ENCODE measurements at regions of chr11 and their contacts with region 1.

Region 1: DNA sequence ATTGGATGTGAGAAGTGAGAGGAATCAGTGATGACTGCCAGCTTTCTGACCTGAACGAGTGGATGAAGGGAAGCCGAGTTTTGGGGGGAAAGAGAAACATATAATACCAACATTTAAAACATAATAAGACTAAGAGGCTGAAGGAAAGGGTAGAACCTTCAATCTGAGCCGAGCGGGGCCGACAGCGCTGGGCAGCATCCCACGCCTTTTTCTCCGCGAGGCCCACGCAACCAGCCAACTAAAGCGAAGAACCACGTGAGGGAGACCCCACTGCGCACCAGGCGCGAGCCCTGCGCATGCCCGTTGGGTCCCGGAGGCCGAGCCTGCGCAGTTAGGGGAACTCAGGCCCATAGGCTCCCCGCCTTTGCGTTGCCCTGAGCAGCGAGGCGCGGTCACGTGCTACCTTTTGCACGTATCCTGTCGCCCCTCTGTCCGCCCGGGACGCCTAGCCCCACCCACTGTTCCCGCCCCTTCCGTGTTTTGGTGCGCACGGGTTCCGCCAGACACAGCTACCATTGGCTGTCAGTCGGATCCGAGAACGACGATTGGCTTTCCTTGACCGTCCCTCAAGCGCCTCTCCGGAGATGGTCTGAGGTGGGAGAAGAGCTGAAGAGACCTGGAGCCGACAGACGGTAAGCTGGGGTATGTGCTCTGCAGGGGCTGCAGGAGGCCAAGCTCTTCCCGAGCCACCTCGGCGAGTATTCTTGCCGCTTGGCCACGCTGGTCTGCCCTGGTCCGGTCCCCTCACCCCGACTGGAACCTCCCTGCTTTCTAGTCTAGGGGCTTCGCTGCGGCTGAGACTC is at the start of gene HINFP:
- DNase-seq: peak; percentile 100
- ATAC-seq: peak; percentile 99 to 100
- H3K4me3 ChIP-seq: peak within 1 kb of the TSS; percentile 67 to 97 (median 87)
- H3K27ac ChIP-seq: peak within 1 kb of the TSS; percentile 85 to 90 (median 88)
- H3K4me1 ChIP-seq: peaks cover 16 to 20% of the 10 kb centered on the region in 2 donors
- H3K27me3 ChIP-seq: no peaks in the 10 kb centered on the region
- CTCF ChIP-seq: no peak
- POLR2A ChIP-seq: peak; percentile 63 to 76
- total RNA-seq, gene HINFP: 8.1 to 17.8 (median 15.3) TPM

Region 2: GRCh38 chr11:118746988-118747585 is 374.1 kb before region 1 on chr11:
- in situ Hi-C with region 1: no loop called
- intact Hi-C with region 1: no loop called
- DNase-seq: no peak
- ATAC-seq: no peak
- H3K4me3 ChIP-seq: no peak overlapping the region
- H3K27ac ChIP-seq: no peak overlapping the region
- H3K4me1 ChIP-seq: no peaks in the 10 kb centered on the region
- H3K27me3 ChIP-seq: no peaks in the 10 kb centered on the region
- CTCF ChIP-seq: no peak
- POLR2A ChIP-seq: no peak

Region 3: GRCh38 chr11:119030329-119031049 is 90.7 kb before region 1 on chr11 and contains the start of gene SLC37A4:
- in situ Hi-C with region 1: no loop called
- intact Hi-C with region 1: no loop called
- DNase-seq: peak; percentile 98 to 99
- ATAC-seq: peak; percentile 77
- H3K4me3 ChIP-seq: peak within 1 kb of the TSS; percentile 83 to 94 (median 91)
- H3K27ac ChIP-seq: peak within 1 kb of the TSS; percentile 92 to 98 (median 94)
- H3K4me1 ChIP-seq: peaks cover 48 to 50% of the 10 kb centered on the region in 2 donors
- H3K27me3 ChIP-seq: no peaks in the 10 kb centered on the region
- CTCF ChIP-seq: peak; percentile 87 to 92 (median 90)
- POLR2A ChIP-seq: peak; percentile 82 to 85
- total RNA-seq, gene SLC37A4: 29.7 to 72.9 (median 56.4) TPM

Region 4: DNA sequence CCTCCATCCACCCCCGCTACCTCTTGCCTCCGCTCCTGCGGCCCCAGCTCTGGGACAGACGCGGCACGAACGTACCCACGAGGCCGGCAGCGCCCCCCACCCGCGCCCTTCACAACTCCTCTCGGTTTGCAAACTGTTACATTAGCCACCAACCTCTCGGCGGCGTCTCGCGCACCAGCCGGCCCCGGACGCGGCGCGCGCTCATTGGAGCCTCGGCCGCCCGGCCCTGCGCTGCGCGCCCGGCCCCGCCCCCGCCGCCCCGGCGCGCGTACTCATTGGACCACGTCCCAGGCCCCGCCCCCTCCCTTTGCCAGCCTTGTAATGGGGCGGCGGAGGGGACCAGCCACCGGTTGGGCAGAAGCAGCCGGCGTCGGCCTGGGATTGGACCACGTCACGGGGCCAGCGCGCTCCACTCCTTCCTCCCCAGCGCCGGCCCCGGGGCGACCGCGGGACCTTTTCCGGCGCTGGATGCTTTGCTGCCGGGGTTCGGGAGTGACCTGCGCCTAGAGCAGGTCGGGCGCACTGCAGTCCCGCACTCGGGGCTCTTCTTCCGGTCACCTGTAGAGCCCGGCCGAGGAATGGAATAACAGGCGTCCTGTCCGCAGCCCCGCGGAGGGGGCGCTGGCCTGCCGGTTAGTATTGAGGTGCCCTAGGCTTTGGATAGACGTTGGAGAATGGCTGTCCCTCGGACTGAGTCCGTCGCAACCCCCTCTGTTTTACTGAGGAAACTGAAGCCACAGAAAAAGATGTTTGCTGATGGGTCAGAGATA is 64.0 kb before region 1 on chr11 and contains the start of gene HYOU1:
- in situ Hi-C with region 1: no loop called
- intact Hi-C with region 1: loop called (anchors 1 kb)
- DNase-seq: peak; percentile 97
- ATAC-seq: peak; percentile 92 to 93
- H3K4me3 ChIP-seq: peak within 1 kb of the TSS; percentile 73 to 92 (median 80)
- H3K27ac ChIP-seq: peak within 1 kb of the TSS; percentile 83 to 95 (median 88)
- H3K4me1 ChIP-seq: peaks cover 13 to 16% of the 10 kb centered on the region in 2 donors
- H3K27me3 ChIP-seq: no peaks in the 10 kb centered on the region
- CTCF ChIP-seq: peak in 2 of 5 experiments; percentile 19 to 36
- POLR2A ChIP-seq: peak; percentile 94 to 95
- total RNA-seq, gene HYOU1: 18.4 to 29.2 (median 21.9) TPM

Region 5: DNA sequence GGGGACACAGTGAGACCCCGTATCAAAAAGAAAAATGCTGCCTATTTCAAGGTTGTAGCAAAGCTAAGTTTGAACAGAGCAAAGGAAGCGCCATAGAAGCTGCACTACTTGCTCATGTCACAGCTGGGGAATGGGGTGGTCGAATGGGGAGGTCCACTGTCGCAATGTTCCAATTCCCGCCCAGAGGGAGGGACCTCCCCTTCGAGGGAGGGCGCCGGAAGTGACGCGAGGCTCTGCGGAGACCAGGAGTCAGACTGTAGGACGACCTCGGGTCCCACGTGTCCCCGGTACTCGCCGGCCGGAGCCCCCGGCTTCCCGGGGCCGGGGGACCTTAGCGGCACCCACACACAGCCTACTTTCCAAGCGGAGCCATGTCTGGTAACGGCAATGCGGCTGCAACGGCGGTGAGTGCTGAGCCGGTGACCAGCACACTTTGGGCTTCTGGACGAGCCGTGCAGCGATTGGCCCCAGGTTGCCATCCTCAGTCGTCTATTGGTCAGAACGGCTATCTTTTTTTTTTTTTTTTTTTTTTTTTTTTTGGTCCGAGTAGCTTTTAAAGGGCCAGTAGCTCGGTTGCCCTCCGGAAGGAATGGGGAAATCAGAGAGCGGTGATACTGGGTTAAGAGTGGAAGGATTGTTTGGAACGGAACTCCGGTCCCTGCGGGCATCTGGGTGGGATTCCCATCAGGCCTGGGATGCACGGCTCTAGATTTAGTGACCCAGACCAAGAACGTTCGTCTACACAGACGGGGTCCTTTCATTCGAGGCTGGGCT is 36.4 kb before region 1 on chr11 and contains the start of gene HMBS:
- in situ Hi-C with region 1: no loop called
- intact Hi-C with region 1: loop called (anchors 1 kb)
- DNase-seq: peak; percentile 87 to 92
- ATAC-seq: peak; percentile 98
- H3K4me3 ChIP-seq: peak within 1 kb of the TSS; percentile 77 to 99 (median 80)
- H3K27ac ChIP-seq: peak within 1 kb of the TSS; percentile 88 to 98 (median 94)
- H3K4me1 ChIP-seq: peaks cover 15 to 17% of the 10 kb centered on the region in 2 donors
- H3K27me3 ChIP-seq: no peaks in the 10 kb centered on the region
- CTCF ChIP-seq: no peak
- POLR2A ChIP-seq: peak; percentile 20 to 49
- total RNA-seq, gene HMBS: 8.7 to 31.1 (median 14.5) TPM

Region 6: DNA sequence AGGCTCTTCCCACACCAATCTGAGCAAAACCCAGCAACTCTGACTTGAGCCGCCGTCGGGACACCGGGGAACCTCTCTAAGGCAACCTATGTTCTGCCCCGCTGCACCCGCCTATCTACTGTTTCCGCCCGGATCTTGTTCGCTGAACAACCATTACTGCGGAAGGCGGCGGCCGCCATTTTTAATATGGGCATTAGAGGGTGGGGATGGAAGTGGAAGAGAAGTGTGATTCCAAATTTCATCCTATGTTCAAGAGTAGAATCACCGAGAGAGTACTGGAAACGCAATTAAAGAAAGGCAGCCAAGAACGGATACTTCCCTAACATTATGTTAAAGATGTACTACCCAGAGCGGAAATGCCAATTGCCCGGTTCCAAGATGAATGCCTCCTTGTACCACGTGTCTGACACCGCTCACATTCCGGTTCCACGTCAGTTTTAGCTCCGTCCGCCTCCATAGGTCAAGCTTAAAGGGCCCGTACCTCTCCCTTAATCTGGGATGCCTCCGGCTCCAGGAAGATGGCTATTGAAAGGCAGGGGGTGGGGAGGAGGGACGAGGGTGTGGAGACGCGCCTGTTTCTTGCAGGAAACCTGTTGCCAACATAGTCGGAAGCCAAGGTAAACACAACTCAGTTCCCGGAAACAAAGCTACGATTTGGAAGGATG is 19.3 kb before region 1 on chr11 and contains the start of gene DPAGT1:
- in situ Hi-C with region 1: no loop called
- intact Hi-C with region 1: loop called (anchors 1 kb)
- DNase-seq: peak; percentile 90 to 91
- ATAC-seq: peak; percentile 97 to 98
- H3K4me3 ChIP-seq: peak within 1 kb of the TSS; percentile 74 to 90 (median 79)
- H3K27ac ChIP-seq: peak within 1 kb of the TSS; percentile 88 to 93 (median 90)
- H3K4me1 ChIP-seq: peaks cover 24 to 31% of the 10 kb centered on the region in 2 donors
- H3K27me3 ChIP-seq: no peaks in the 10 kb centered on the region
- CTCF ChIP-seq: peak in 1 of 5 experiments; percentile 29
- POLR2A ChIP-seq: peak; percentile 19 to 43
- total RNA-seq, gene DPAGT1: 8.9 to 34.0 (median 15.1) TPM

Region 7: GRCh38 chr11:119168471-119169281 is 47.5 kb after region 1 on chr11 and contains the start of gene NLRX1:
- in situ Hi-C with region 1: no loop called
- intact Hi-C with region 1: loop called (anchors 2 kb)
- DNase-seq: peak; percentile 70 to 82
- ATAC-seq: peak; percentile 92 to 95
- H3K4me3 ChIP-seq: peak within 1 kb of the TSS; percentile 71 to 91 (median 80)
- H3K27ac ChIP-seq: peak within 1 kb of the TSS; percentile 82 to 95 (median 92)
- H3K4me1 ChIP-seq: peaks cover 8 to 10% of the 10 kb centered on the region in 2 donors
- H3K27me3 ChIP-seq: no peaks in the 10 kb centered on the region
- CTCF ChIP-seq: peak; percentile 74 to 92 (median 90)
- POLR2A ChIP-seq: peak; percentile 30 to 62
- total RNA-seq, gene NLRX1: 12.2 to 21.3 (median 16.4) TPM

Region 8: GRCh38 chr11:119295178-119295577 is 174.0 kb after region 1 on chr11:
- in situ Hi-C with region 1: no loop called
- intact Hi-C with region 1: loop called (anchors 1 kb)
- DNase-seq: no peak
- ATAC-seq: no peak
- H3K4me3 ChIP-seq: no peak overlapping the region
- H3K27ac ChIP-seq: no peak overlapping the region
- H3K4me1 ChIP-seq: peaks cover 27 to 33% of the 10 kb centered on the region in 2 donors
- H3K27me3 ChIP-seq: no peaks in the 10 kb centered on the region
- CTCF ChIP-seq: no peak
- POLR2A ChIP-seq: no peak

Region 9: GRCh38 chr11:119315131-119316015 is 194.2 kb after region 1 on chr11:
- in situ Hi-C with region 1: no loop called
- intact Hi-C with region 1: no loop called
- DNase-seq: no peak
- ATAC-seq: peak in 1 of 2 donors; percentile 14
- H3K4me3 ChIP-seq: peak overlapping the region; percentile 60 to 79 (median 69)
- H3K27ac ChIP-seq: peak overlapping the region; percentile 80 to 85 (median 83)
- H3K4me1 ChIP-seq: peaks cover 35 to 38% of the 10 kb centered on the region in 2 donors
- H3K27me3 ChIP-seq: peaks cover 0 to 3% (median 3%) of the 10 kb centered on the region in 3 donors
- CTCF ChIP-seq: peak in 2 of 5 experiments; percentile 13 to 18
- POLR2A ChIP-seq: no peak

Region 10: DNA sequence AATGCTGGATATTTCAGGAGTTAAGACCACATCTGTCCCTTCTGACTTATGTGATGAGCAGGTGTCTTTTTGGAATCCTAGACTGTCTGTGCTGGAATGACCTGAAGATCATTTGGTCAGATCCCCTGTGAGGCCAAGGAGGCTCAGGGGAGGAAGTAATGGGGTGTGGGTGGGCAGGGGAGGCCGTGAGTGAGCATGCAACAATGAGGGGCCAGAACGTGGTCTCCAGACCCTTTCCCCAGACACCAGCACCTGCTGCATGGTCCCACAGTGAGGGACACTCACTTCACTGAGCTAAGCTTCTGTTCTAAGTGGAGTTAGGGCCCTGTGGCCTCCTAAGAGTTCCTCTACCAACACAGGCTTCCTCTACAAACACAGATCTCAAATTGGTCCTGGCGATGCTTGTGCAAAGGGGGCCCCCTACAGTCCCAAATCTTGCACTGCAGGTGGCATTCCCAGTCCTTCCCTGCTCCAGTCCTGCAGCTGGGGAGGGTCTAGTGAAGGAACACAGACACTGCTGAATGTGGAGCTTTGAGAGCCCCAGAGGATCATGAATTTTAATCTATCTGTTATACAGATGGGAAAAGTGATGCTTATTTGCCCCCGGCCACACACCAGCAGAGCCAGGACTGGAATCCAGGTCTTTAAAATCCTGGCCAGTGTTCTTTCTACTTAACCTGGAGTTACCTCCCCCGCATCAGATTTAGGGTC is 252.9 kb after region 1 on chr11:
- in situ Hi-C with region 1: no loop called
- intact Hi-C with region 1: no loop called
- DNase-seq: peak in 1 of 2 donors; percentile 82
- ATAC-seq: peak; percentile 10 to 15
- H3K4me3 ChIP-seq: peak overlapping the region in 1 of 4 donors; percentile 38
- H3K27ac ChIP-seq: peak overlapping the region; percentile 96 to 99 (median 98)
- H3K4me1 ChIP-seq: peaks cover 82 to 89% of the 10 kb centered on the region in 2 donors
- H3K27me3 ChIP-seq: no peaks in the 10 kb centered on the region
- CTCF ChIP-seq: peak; percentile 93 to 96 (median 93)
- POLR2A ChIP-seq: no peak

Measured in gastrocnemius medialis (tissue), 4 donors.